ENCODE measurements at regions of chr3 and their contacts with region 1.

Region 1: GRCh38 chr3:40584625-40585189 is 59.9 kb downstream of the ZNF621 start:
- DNase-seq: peak; percentile 94
- H3K4me3 ChIP-seq: peak overlapping the region in 1 of 4 donors; percentile 13
- H3K27ac ChIP-seq: no peak overlapping the region
- H3K4me1 ChIP-seq: peaks cover 11 to 26% (median 15%) of the 10 kb centered on the region in 4 donors
- H3K27me3 ChIP-seq: no peaks in the 10 kb centered on the region
- CTCF ChIP-seq: peak; percentile 90 to 97 (median 93)
- EP300 ChIP-seq: no peak
- POLR2A ChIP-seq: no peak

Region 2: GRCh38 chr3:40329071-40329470 is 255.6 kb before region 1 on chr3:
- intact Hi-C with region 1: loop called (anchors 5 kb)
- DNase-seq: no peak
- H3K4me3 ChIP-seq: no peak overlapping the region
- H3K27ac ChIP-seq: no peak overlapping the region
- H3K4me1 ChIP-seq: peaks cover 0 to 5% (median 1%) of the 10 kb centered on the region in 4 donors
- H3K27me3 ChIP-seq: no peaks in the 10 kb centered on the region
- CTCF ChIP-seq: no peak
- EP300 ChIP-seq: no peak
- POLR2A ChIP-seq: no peak

Region 3: GRCh38 chr3:40971191-40972168 is 386.8 kb after region 1 on chr3:
- intact Hi-C with region 1: loop called (anchors 10 kb)
- DNase-seq: no peak
- H3K4me3 ChIP-seq: no peak overlapping the region
- H3K27ac ChIP-seq: peak overlapping the region; percentile 65 to 82 (median 74)
- H3K4me1 ChIP-seq: peaks cover 61 to 66% (median 65%) of the 10 kb centered on the region in 4 donors
- H3K27me3 ChIP-seq: no peaks in the 10 kb centered on the region
- CTCF ChIP-seq: no peak
- EP300 ChIP-seq: peak; percentile 78
- POLR2A ChIP-seq: no peak

Region 4: GRCh38 chr3:41207355-41207754 is 622.6 kb after region 1 on chr3:
- intact Hi-C with region 1: loop called (anchors 5 kb)
- DNase-seq: no peak
- H3K4me3 ChIP-seq: no peak overlapping the region
- H3K27ac ChIP-seq: no peak overlapping the region
- H3K4me1 ChIP-seq: peaks cover 64 to 81% (median 80%) of the 10 kb centered on the region in 4 donors
- H3K27me3 ChIP-seq: no peaks in the 10 kb centered on the region
- CTCF ChIP-seq: no peak
- EP300 ChIP-seq: no peak
- POLR2A ChIP-seq: no peak

Region 5: GRCh38 chr3:41716471-41716870 is 1131.8 kb after region 1 on chr3:
- intact Hi-C with region 1: loop called (anchors 5 kb)
- DNase-seq: no peak
- H3K4me3 ChIP-seq: no peak overlapping the region
- H3K27ac ChIP-seq: no peak overlapping the region
- H3K4me1 ChIP-seq: no peaks in the 10 kb centered on the region
- H3K27me3 ChIP-seq: no peaks in the 10 kb centered on the region
- CTCF ChIP-seq: peak; percentile 35 to 41 (median 38)
- EP300 ChIP-seq: no peak
- POLR2A ChIP-seq: no peak

Region 6: DNA sequence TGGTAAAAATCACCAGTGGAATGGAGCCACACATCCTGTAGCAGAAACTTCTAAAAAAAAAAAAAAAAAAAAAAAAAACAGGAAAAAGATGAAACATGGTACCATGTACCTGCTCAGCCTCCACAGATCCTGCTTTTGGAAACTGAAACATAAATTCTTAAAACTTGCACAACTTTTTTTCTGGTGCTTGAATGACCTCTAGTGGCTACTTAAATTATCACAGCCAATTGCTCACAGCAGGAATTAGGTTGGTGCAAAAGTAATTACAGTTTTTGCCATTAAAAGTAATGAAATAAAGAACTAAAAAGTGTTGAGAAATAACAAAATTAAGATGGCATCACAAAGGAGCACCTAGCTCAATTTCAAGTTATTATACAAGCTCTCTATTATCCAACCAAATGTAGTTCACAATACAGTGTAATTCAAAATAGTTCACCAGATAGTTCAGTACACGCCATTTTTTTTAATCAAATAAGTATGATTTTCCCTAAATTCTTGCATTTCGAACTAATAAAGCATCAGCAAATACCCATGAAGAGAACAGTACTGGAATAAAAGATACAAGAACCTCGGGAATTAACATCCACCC is 1296.6 kb after region 1 on chr3:
- intact Hi-C with region 1: loop called (anchors 2 kb)
- DNase-seq: no peak
- H3K4me3 ChIP-seq: no peak overlapping the region
- H3K27ac ChIP-seq: no peak overlapping the region
- H3K4me1 ChIP-seq: no peaks in the 10 kb centered on the region
- H3K27me3 ChIP-seq: no peaks in the 10 kb centered on the region
- CTCF ChIP-seq: peak; percentile 68 to 70 (median 68)
- EP300 ChIP-seq: no peak
- POLR2A ChIP-seq: no peak

Measured in esophagus muscularis mucosa (tissue), 4 donors.